K562 (cell line): ENCODE measurements at regions of chr7 and their contacts with region 1.

Region 1: DNA sequence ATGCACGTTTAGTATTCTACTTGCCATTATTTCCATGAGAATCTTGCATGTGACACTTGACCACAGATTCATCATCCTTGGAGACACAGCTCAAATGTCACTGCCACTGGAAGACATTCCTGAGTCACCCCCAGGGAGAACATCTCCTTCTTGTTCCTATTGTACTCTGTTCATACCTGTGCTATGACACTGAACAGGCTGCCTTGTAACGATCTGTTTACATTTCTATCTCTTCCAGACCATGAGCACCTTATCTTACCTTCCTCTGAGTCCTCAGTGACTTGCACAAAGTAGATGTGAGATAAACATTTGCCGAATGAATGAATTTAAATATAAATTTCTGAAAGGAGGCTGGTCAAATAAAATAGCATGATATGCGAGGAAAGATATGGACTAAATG is 331.9 kb upstream of the LRRN3 start:
- DNase-seq: peak in 2 of 4 experiments; percentile 5 to 11
- ATAC-seq: peak; percentile 78
- H3K4me3 ChIP-seq: no peak overlapping the region
- H3K27ac ChIP-seq: no peak overlapping the region
- H3K4me1 ChIP-seq: peaks cover 0 to 4% of the 10 kb centered on the region in 2 experiments; a peak in 2 of 5 replicates
- H3K27me3 ChIP-seq: no peaks in the 10 kb centered on the region
- CTCF ChIP-seq: no peak
- EP300 ChIP-seq: 0 out of 2 replicates have a peak, but pooled peaks have one; percentile 12
- POLR2A ChIP-seq: no peak
- RAD21 ChIP-seq: no peak

Region 2: GRCh38 chr7:110790992-110791391 is 31.9 kb after region 1 on chr7:
- CTCF ChIA-PET with region 1: no interaction called
- POLR2A ChIA-PET with region 1: no interaction called
- in situ Hi-C with region 1: loop called (anchors 5 kb)
- intact Hi-C with region 1: no loop called
- DNase-seq: no peak
- ATAC-seq: no peak
- H3K4me3 ChIP-seq: no peak overlapping the region
- H3K27ac ChIP-seq: no peak overlapping the region
- H3K4me1 ChIP-seq: no peaks in the 10 kb centered on the region
- H3K27me3 ChIP-seq: no peaks in the 10 kb centered on the region
- CTCF ChIP-seq: no peak
- EP300 ChIP-seq: no peak
- POLR2A ChIP-seq: no peak
- RAD21 ChIP-seq: no peak

Region 3: DNA sequence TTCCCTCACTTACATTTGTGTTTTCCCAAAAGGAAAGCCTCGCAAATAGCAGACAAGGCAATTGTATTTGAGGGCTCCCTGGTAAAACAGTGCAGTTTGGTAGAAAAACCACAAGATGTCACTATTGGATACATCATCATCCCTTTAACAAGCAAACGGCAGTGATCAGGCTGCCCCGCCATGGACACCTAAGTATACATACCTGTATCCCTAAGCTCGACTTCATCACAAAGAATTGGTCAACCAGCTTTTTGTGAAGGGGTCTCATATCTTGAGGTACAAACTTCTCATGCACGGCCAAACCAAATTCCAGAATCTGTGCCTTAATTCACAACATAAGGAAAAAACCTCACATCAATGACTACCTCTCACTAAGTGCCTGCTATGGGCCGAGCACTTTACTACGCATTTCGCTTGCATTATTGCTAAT is 982.8 kb after region 1 on chr7:
- CTCF ChIA-PET with region 1: no interaction called
- POLR2A ChIA-PET with region 1: no interaction called
- in situ Hi-C with region 1: no loop called
- intact Hi-C with region 1: no loop called
- DNase-seq: peak; percentile 74 to 87 (median 82)
- ATAC-seq: peak; percentile 95
- H3K4me3 ChIP-seq: no peak overlapping the region
- H3K27ac ChIP-seq: no peak overlapping the region
- H3K4me1 ChIP-seq: no peaks in the 10 kb centered on the region
- H3K27me3 ChIP-seq: peaks cover 9 to 15% of the 10 kb centered on the region in 2 experiments; a peak in 4 of 5 replicates
- CTCF ChIP-seq: peak; percentile 93 to 98 (median 93)
- EP300 ChIP-seq: no peak
- POLR2A ChIP-seq: no peak
- RAD21 ChIP-seq: peak; percentile 95 to 97